ENCODE measurements at regions of chr22 and their contacts with region 1.

Region 1: DNA sequence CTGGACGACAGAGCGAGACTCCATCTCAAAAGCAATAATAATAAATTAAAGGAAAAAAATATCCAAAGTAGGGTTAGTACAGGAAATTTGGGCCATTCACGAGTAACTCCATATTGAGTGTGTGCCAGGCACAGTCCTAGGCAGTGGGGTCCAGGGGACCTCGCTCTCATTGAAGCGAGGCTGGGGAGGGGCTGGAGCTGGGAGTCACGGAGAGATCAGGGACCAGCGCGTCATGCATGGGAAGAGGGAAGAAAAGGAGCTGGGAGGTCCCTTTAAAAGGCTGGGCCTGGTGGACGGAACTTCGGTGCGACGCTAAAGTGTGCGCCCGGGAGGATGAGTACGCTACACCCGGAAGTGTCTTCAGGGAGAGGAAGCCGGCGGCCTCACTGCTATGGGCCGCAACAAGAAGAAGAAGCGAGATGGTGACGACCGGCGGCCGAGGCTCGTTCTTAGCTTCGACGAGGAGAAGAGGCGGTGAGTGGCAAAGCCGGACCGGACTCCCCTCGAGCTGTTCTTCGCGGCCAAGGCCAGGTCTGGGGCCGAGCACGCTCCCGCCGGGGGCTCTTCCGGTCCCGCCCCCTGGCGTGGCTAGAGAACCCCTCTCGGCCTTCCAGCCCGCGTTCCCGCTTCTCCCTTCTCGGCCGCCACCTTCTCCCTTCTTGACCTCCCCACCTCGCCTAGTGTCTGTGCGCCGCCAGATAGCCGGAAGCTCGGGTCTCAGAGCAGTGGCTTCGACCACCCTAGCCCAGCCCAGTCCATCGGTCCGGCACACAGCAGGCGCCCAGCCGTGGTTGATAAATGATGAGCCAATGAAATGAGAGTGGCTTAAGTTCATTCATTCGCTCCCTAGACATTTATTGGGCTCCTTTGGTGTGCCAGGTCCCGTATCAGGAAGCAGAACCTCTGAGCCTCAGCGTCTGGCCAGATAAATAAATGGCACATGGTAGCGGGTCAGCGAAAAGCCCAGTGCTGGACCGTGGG is at the start of gene NOL12:
- DNase-seq: peak; percentile 63 to 90 (median 74)
- ATAC-seq: peak; percentile 91
- H3K4me3 ChIP-seq: peak within 1 kb of the TSS; percentile 88 to 97
- H3K4me3 Mint-ChIP-seq: peak within 1 kb of the TSS; percentile 94
- H3K27ac ChIP-seq: peak within 1 kb of the TSS; percentile 79 to 87
- H3K27ac Mint-ChIP-seq: peak within 1 kb of the TSS; percentile 95
- H3K4me1 ChIP-seq: peaks cover 16% of the 10 kb centered on the region
- H3K4me1 Mint-ChIP-seq: peaks cover 28% of the 10 kb centered on the region
- H3K27me3 ChIP-seq: no peaks in the 10 kb centered on the region
- H3K27me3 Mint-ChIP-seq: no peaks in the 10 kb centered on the region
- CTCF ChIP-seq: no peak
- total RNA-seq, gene NOL12: 25.1 to 29.1 TPM

Region 2: DNA sequence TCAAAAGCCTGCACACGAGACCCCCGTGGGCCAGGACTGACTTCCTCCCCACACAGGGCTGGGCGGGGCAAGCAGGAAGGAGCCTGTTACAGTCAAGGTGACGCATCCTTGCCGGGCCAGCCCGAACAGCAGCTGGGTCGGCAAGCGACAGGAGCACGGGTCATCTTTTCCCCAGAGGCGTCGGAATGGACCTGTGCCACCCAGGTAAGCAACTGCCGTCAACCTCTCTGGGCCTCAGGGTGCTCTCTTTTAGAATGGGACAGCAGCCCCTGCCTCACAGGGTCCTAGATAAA is 404.0 kb before region 1 on chr22 and contains the start of gene CYTH4:
- CTCF ChIA-PET with region 1: no interaction called
- POLR2A ChIA-PET with region 1: no interaction called
- intact Hi-C with region 1: no loop called
- DNase-seq: peak; percentile 34 to 88 (median 82)
- ATAC-seq: peak; percentile 76
- H3K4me3 ChIP-seq: peak within 1 kb of the TSS; percentile 84 to 98
- H3K4me3 Mint-ChIP-seq: peak within 1 kb of the TSS; percentile 89
- H3K27ac ChIP-seq: peak within 1 kb of the TSS; percentile 82 to 84
- H3K27ac Mint-ChIP-seq: peak within 1 kb of the TSS; percentile 98
- H3K4me1 ChIP-seq: peaks cover 45% of the 10 kb centered on the region
- H3K4me1 Mint-ChIP-seq: peaks cover 60% of the 10 kb centered on the region
- H3K27me3 ChIP-seq: no peaks in the 10 kb centered on the region
- H3K27me3 Mint-ChIP-seq: no peaks in the 10 kb centered on the region
- CTCF ChIP-seq: no peak
- total RNA-seq, gene CYTH4: 129 to 143 TPM

Region 3: GRCh38 chr22:37486224-37486845 is 200.0 kb before region 1 on chr22 and contains the start of gene MFNG:
- CTCF ChIA-PET with region 1: no interaction called
- POLR2A ChIA-PET with region 1: no interaction called
- intact Hi-C with region 1: loop called in 1 of 2 experiments (anchors 10 kb)
- DNase-seq: peak; percentile 35 to 87 (median 74)
- ATAC-seq: peak; percentile 59
- H3K4me3 ChIP-seq: peak within 1 kb of the TSS; percentile 73 to 96
- H3K4me3 Mint-ChIP-seq: peak within 1 kb of the TSS; percentile 94
- H3K27ac ChIP-seq: peak within 1 kb of the TSS; percentile 69 to 87
- H3K27ac Mint-ChIP-seq: peak within 1 kb of the TSS; percentile 98
- H3K4me1 ChIP-seq: peaks cover 62% of the 10 kb centered on the region
- H3K4me1 Mint-ChIP-seq: peaks cover 72% of the 10 kb centered on the region
- H3K27me3 ChIP-seq: no peaks in the 10 kb centered on the region
- H3K27me3 Mint-ChIP-seq: no peaks in the 10 kb centered on the region
- CTCF ChIP-seq: no peak
- total RNA-seq, gene MFNG: 63.2 to 63.9 TPM

Region 4: DNA sequence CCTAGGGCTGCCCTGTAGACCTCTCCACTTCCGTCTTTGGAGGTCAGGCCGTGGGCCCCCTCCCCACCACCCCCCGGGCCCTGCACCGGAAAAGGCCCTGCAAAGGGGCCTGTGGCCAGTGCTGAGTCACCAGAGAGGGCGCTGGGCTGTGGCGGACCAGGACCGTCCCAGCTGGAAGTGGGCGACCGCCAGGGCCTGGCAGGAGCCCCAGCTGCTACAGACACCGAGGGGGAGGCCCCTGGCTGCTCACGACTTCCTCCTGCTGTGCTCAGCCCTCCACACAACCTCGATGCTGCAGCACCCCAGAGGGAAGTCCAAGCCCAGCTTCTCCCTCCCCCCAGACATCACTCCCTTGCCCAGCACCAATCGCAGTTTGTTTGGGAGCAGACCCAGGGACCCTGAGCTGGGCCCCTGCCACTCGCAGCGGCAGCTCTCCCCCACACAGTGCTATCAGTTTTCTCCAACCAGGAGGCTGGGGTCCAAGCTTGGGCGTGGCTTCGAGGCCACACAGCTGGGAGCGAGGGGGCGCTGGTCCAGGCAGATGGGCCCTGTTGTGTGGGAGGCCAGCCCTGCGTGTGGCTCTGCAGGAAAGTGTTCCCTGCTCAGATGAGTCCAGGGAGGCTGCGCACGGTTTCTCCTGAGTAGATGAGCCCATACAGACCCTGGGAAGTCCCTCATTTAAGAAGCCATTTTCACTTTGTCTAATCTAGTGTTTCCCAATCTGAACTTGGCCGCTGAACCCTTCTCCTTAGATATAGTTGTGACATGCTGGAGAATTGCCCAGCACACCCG is 52.5 kb before region 1 on chr22:
- CTCF ChIA-PET with region 1: interaction called, 2,176 read pairs
- POLR2A ChIA-PET with region 1: interaction called, 11 read pairs
- intact Hi-C with region 1: no loop called
- DNase-seq: peak in 8 of 9 experiments; percentile 42 to 84 (median 64)
- ATAC-seq: peak; percentile 62
- H3K4me3 ChIP-seq: peak overlapping the region; percentile 34 to 40
- H3K4me3 Mint-ChIP-seq: peak overlapping the region; percentile 74
- H3K27ac ChIP-seq: peak overlapping the region; percentile 39 to 79
- H3K27ac Mint-ChIP-seq: peak overlapping the region; percentile 92
- H3K4me1 ChIP-seq: peaks cover 89% of the 10 kb centered on the region
- H3K4me1 Mint-ChIP-seq: peaks cover 78% of the 10 kb centered on the region
- H3K27me3 ChIP-seq: no peaks in the 10 kb centered on the region
- H3K27me3 Mint-ChIP-seq: no peaks in the 10 kb centered on the region
- CTCF ChIP-seq: no peak

Region 5: GRCh38 chr22:37701141-37701786 is 15.0 kb after region 1 on chr22:
- CTCF ChIA-PET with region 1: no interaction called
- POLR2A ChIA-PET with region 1: no interaction called
- intact Hi-C with region 1: no loop called
- DNase-seq: peak in 1 of 9 experiments; percentile 13
- ATAC-seq: no peak
- H3K4me3 ChIP-seq: no peak overlapping the region
- H3K4me3 Mint-ChIP-seq: no peak overlapping the region
- H3K27ac ChIP-seq: no peak overlapping the region
- H3K27ac Mint-ChIP-seq: no peak overlapping the region
- H3K4me1 ChIP-seq: peaks cover 3% of the 10 kb centered on the region
- H3K4me1 Mint-ChIP-seq: peaks cover 8% of the 10 kb centered on the region
- H3K27me3 ChIP-seq: no peaks in the 10 kb centered on the region
- H3K27me3 Mint-ChIP-seq: no peaks in the 10 kb centered on the region
- CTCF ChIP-seq: no peak

Region 6: DNA sequence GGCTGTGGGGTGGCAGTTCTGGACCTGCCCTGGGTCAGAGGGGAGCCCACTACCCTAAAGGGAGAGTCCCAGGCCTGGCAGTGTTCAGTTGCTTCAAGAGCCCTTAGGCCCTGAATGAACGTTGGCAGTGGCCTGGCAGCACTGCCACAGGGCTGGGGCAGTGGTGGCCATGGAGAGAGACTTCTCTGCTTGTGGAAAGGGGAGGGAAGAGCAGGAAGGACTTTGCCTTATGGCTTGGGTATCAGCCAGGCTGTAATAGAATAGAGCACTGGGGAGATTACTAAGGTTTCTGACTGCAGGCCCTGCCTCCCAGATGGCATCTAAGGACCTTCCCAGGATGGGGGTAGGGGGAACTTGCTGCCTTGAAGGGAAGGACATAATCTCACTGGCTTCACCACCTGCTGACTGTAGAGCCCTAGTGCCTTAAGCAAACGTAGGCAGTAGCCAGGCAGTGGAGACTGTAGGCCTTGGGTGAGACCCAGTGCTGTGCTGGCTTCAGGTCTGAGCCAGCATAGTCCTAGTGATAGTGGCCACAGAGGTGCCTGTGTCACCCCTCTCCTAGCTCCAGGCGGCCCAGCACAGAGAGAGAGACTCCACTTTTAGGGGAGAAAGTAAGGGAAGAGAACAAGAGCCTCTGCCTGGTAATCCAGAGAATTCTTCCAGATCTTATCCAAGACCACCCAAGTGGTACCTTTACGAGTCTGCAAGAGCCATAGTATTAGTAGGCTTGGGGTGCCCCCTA is 467.7 kb after region 1 on chr22:
- CTCF ChIA-PET with region 1: no interaction called
- POLR2A ChIA-PET with region 1: no interaction called
- intact Hi-C with region 1: no loop called
- DNase-seq: no peak
- ATAC-seq: no peak
- H3K4me3 ChIP-seq: no peak overlapping the region
- H3K4me3 Mint-ChIP-seq: no peak overlapping the region
- H3K27ac ChIP-seq: no peak overlapping the region
- H3K27ac Mint-ChIP-seq: no peak overlapping the region
- H3K4me1 ChIP-seq: no peaks in the 10 kb centered on the region
- H3K4me1 Mint-ChIP-seq: peaks cover 11% of the 10 kb centered on the region
- H3K27me3 ChIP-seq: no peaks in the 10 kb centered on the region
- H3K27me3 Mint-ChIP-seq: no peaks in the 10 kb centered on the region
- CTCF ChIP-seq: no peak

Measured in CD8-positive, alpha-beta T cell (primary cell).